Breast epithelium (tissue), 4 donors: ENCODE measurements at regions of chr11 and their contacts with region 1.

Region 1: GRCh38 chr11:8671193-8671612 is 11.3 kb downstream of the TRIM66 start:
- DNase-seq: no peak
- H3K4me3 ChIP-seq: no peak overlapping the region
- H3K27ac ChIP-seq: peak overlapping the region; percentile 45 to 78
- H3K4me1 ChIP-seq: no peaks in the 10 kb centered on the region
- H3K27me3 ChIP-seq: no peaks in the 10 kb centered on the region
- CTCF ChIP-seq: no peak
- POLR2A ChIP-seq: no peak

Region 2: GRCh38 chr11:8964324-8965320 is 293.4 kb after region 1 on chr11 and contains the start of gene TMEM9B:
- intact Hi-C with region 1: loop called (anchors 10 kb)
- DNase-seq: peak; percentile 85 to 89
- H3K4me3 ChIP-seq: peak within 1 kb of the TSS; percentile 84 to 91 (median 91)
- H3K27ac ChIP-seq: peak within 1 kb of the TSS; percentile 96 to 97
- H3K4me1 ChIP-seq: peaks cover 0 to 13% of the 10 kb centered on the region in 2 donors
- H3K27me3 ChIP-seq: no peaks in the 10 kb centered on the region
- CTCF ChIP-seq: peak in 1 of 3 donors; percentile 18
- POLR2A ChIP-seq: peak; percentile 95
- total RNA-seq, gene TMEM9B: 37.1 to 68.8 (median 47.5) TPM